ENCODE measurements at regions of chr12 and their contacts with region 1.

Region 1: GRCh38 chr12:11134305-11134704 is at the start of gene TAS2R30:
- DNase-seq: no peak
- H3K4me3 ChIP-seq: no peak within 1 kb of the TSS
- H3K27ac ChIP-seq: no peak within 1 kb of the TSS
- H3K4me1 ChIP-seq: no peaks in the 10 kb centered on the region
- H3K27me3 ChIP-seq: no peaks in the 10 kb centered on the region
- CTCF ChIP-seq: no peak
- EP300 ChIP-seq: no peak
- POLR2A ChIP-seq: no peak
- total RNA-seq, gene TAS2R30: 1.4 to 23.2 (median 12.3) TPM

Region 2: GRCh38 chr12:11081987-11082386 is 52.3 kb before region 1 on chr12:
- in situ Hi-C with region 1: loop called in 1 of 4 experiments (anchors 5 kb)
- intact Hi-C with region 1: no loop called
- DNase-seq: no peak
- H3K4me3 ChIP-seq: no peak overlapping the region
- H3K27ac ChIP-seq: no peak overlapping the region
- H3K4me1 ChIP-seq: no peaks in the 10 kb centered on the region
- H3K27me3 ChIP-seq: no peaks in the 10 kb centered on the region
- CTCF ChIP-seq: no peak
- EP300 ChIP-seq: no peak
- POLR2A ChIP-seq: no peak

Region 3: DNA sequence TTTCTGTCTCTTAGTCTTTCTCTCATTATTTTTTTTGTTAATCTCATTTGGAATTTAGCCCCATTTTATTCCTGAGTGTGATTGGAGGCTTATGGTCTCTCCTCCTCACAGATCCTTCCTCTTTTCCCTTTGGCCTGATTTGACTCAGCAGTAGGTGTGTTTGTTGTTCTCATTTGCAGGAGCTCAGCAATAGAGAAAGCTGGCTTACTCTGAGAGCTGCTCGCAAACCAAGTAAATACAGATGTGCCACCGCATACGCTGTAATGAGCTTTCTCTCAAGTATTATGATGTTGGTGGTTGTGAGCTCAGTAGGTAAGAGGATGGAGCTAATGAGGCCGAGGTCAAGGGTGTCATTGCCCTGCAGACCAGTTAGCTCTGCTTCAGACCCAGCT is 721.7 kb after region 1 on chr12:
- in situ Hi-C with region 1: no loop called
- intact Hi-C with region 1: no loop called
- DNase-seq: no peak
- H3K4me3 ChIP-seq: no peak overlapping the region
- H3K27ac ChIP-seq: peak overlapping the region; percentile 46 to 62 (median 60)
- H3K4me1 ChIP-seq: peaks cover 3 to 47% (median 22%) of the 10 kb centered on the region in 4 donors
- H3K27me3 ChIP-seq: no peaks in the 10 kb centered on the region
- CTCF ChIP-seq: no peak
- EP300 ChIP-seq: no peak
- POLR2A ChIP-seq: no peak

Measured in transverse colon (tissue), 4 donors.